Esophagus squamous epithelium (tissue), 5 donors: ENCODE measurements at regions of chr13 and their contacts with region 1.

Region 1: DNA sequence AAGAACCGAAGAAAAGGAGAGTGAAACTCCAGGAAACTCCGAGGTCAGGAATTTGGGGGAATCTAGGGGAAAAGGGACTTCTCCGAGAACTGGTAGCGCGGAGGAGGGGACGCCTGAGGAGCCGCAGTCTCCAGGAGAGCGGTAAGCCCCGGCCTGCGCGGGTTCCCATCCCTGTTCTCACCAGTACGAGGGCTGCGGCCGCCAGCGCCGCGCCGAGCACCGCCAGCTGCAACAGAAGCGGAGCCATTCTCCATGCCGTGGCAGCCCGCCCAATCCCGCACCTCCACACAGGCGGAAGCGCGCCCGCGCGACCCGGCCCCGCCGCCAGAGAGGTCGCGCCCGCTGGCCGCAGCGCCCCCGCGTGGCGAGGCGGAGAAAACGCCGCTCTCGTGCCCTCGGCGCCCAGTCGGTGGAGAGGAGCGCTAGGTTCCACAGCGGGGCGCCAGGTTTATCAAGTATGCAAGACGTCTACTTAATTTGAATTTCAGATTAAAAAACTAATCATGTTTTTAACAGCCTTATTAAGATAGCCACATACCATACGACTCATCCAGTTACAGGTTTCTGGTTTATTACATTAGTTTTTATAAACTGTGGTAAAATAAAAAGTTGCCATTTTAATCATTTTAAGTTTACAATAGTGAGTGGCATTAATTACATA is at the start of gene ALG5:
- DNase-seq: peak; percentile 35
- H3K4me3 ChIP-seq: peak within 1 kb of the TSS; percentile 68 to 99 (median 93)
- H3K27ac ChIP-seq: peak within 1 kb of the TSS; percentile 92 to 99 (median 96)
- H3K4me1 ChIP-seq: peaks cover 0 to 33% (median 14%) of the 10 kb centered on the region in 3 donors
- H3K27me3 ChIP-seq: no peaks in the 10 kb centered on the region
- CTCF ChIP-seq: peak; percentile 89 to 98 (median 97)
- POLR2A ChIP-seq: peak in 2 of 4 donors; percentile 41 to 67
- total RNA-seq, gene ALG5: 15.0 to 43.1 (median 23.3) TPM

Region 2: GRCh38 chr13:37049810-37050209 is 50.6 kb after region 1 on chr13:
- intact Hi-C with region 1: loop called (anchors 5 kb)
- DNase-seq: no peak
- H3K4me3 ChIP-seq: no peak overlapping the region
- H3K27ac ChIP-seq: no peak overlapping the region
- H3K4me1 ChIP-seq: no peaks in the 10 kb centered on the region
- H3K27me3 ChIP-seq: no peaks in the 10 kb centered on the region
- CTCF ChIP-seq: no peak
- POLR2A ChIP-seq: no peak

Region 3: DNA sequence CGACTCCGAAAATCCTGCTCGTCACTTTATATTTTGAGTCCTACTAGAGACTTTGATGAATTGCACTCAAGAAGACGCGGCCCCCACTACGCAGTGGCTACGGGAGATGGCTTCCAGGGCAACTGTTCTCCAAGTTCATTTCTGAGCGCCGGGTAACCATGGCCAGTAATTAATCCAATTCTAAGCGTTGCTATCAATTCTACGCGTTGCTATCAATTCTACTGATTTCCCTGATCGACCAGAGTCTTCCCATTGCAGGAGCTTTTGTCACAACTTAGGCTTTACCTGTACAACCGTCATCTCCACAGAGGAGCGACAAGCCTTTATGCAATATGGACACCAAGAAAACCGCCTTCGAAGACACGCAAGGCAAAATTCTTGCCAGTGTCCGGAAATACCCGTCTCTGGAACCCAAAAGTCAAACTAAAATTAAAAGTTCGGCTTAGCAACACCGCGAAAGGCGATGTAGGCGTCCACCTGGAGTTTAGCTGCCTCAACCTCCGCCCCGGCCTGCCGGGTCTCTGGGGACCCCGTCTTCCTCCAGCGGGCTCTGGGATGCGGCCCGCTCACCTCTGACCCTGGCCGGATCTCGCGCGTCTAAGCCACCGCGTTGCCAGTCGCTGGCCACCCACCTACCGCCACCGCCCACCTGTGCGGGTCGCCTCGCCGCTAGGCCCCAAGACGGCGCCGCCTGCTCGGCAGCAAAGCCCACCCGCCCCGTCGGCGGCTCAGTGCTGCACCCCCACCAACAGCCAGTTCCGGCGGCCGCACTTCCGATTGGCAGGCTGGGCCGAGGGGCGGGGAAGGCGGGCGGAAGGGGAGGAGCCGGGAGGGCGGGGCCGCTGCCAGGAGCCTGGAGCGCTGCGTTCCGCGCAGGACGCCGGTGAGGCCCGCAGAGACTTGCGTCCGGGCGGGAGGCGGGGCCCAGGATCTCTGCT is 60.0 kb after region 1 on chr13 and contains the start of gene SUPT20H:
- intact Hi-C with region 1: loop called (anchors 5 kb)
- DNase-seq: peak; percentile 71
- H3K4me3 ChIP-seq: peak within 1 kb of the TSS; percentile 78 to 95 (median 88)
- H3K27ac ChIP-seq: peak within 1 kb of the TSS; percentile 94 to 96 (median 96)
- H3K4me1 ChIP-seq: peaks cover 3 to 27% (median 10%) of the 10 kb centered on the region in 3 donors
- H3K27me3 ChIP-seq: no peaks in the 10 kb centered on the region
- CTCF ChIP-seq: no peak
- POLR2A ChIP-seq: peak in 3 of 4 donors; percentile 48 to 91 (median 64)
- total RNA-seq, gene SUPT20H: 18.1 to 40.2 (median 27.1) TPM

Region 4: GRCh38 chr13:37097076-37097475 is 97.9 kb after region 1 on chr13:
- intact Hi-C with region 1: no loop called
- DNase-seq: no peak
- H3K4me3 ChIP-seq: no peak overlapping the region
- H3K27ac ChIP-seq: no peak overlapping the region
- H3K4me1 ChIP-seq: no peaks in the 10 kb centered on the region
- H3K27me3 ChIP-seq: no peaks in the 10 kb centered on the region
- CTCF ChIP-seq: no peak
- POLR2A ChIP-seq: no peak